Naive thymus-derived CD4-positive, alpha-beta T cell (primary cell): ENCODE measurements at regions of chr2 and their contacts with region 1.

Region 1: GRCh38 chr2:178498137-178498536 is 17.9 kb downstream of the PLEKHA3 start:
- DNase-seq: no peak
- ATAC-seq: no peak
- H3K4me3 ChIP-seq: no peak overlapping the region
- H3K4me3 Mint-ChIP-seq: no peak overlapping the region
- H3K27ac ChIP-seq: no peak overlapping the region
- H3K27ac Mint-ChIP-seq: no peak overlapping the region
- H3K4me1 ChIP-seq: no peaks in the 10 kb centered on the region
- H3K4me1 Mint-ChIP-seq: peaks cover 0 to 12% (median 0%) of the 10 kb centered on the region in 7 donors
- H3K27me3 ChIP-seq: no peaks in the 10 kb centered on the region
- H3K27me3 Mint-ChIP-seq: no peaks in the 10 kb centered on the region

Region 2: GRCh38 chr2:178344121-178344520 is 154.0 kb before region 1 on chr2:
- CTCF ChIA-PET with region 1: no interaction called
- POLR2A ChIA-PET with region 1: no interaction called
- intact Hi-C with region 1: no loop called
- DNase-seq: no peak
- ATAC-seq: no peak
- H3K4me3 ChIP-seq: no peak overlapping the region
- H3K4me3 Mint-ChIP-seq: no peak overlapping the region
- H3K27ac ChIP-seq: no peak overlapping the region
- H3K27ac Mint-ChIP-seq: no peak overlapping the region
- H3K4me1 ChIP-seq: no peaks in the 10 kb centered on the region
- H3K4me1 Mint-ChIP-seq: peaks cover 0 to 2% (median 0%) of the 10 kb centered on the region in 7 donors
- H3K27me3 ChIP-seq: peaks cover 0 to 2% of the 10 kb centered on the region in 2 donors
- H3K27me3 Mint-ChIP-seq: peaks cover 39 to 50% (median 43%) of the 10 kb centered on the region in 5 donors

Region 3: DNA sequence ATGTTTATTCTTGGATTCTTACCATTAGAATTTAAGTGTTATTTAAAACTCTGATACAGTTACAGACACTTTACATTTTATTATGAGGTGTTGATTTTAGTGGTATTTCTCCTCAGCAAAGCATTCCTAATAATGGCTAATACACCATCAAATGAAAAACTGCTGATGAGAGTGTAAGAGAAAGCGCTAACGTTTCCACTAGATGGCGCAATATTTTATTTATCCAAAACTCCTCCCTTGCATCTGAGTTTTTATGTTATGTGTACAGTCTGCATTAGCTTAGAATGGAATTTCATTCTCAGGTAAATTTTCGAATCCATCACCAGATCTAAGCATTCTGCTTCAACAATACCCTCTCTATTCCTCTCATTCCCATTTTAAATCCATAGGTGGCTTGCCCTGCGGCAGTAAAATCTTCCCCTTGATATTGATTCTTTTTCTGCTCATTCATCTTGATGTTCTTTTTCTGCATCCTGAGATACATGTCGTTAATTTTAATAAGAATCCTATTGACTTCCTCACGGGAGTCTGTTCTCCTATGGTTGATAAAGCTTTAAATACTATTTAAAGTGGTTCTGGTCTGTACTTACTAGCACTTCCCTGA is 101.0 kb before region 1 on chr2:
- CTCF ChIA-PET with region 1: no interaction called
- POLR2A ChIA-PET with region 1: interaction called, 3 read pairs
- intact Hi-C with region 1: loop called in 1 of 2 experiments (anchors 1 kb)
- DNase-seq: peak in 6 of 9 donors; percentile 5 to 44 (median 30)
- ATAC-seq: peak; percentile 75
- H3K4me3 ChIP-seq: no peak overlapping the region
- H3K4me3 Mint-ChIP-seq: no peak overlapping the region
- H3K27ac ChIP-seq: no peak overlapping the region
- H3K27ac Mint-ChIP-seq: no peak overlapping the region
- H3K4me1 ChIP-seq: no peaks in the 10 kb centered on the region
- H3K4me1 Mint-ChIP-seq: peaks cover 0 to 6% (median 0%) of the 10 kb centered on the region in 7 donors
- H3K27me3 ChIP-seq: no peaks in the 10 kb centered on the region
- H3K27me3 Mint-ChIP-seq: peaks cover 0 to 32% (median 5%) of the 10 kb centered on the region in 5 donors